Caco-2 (cell line): ENCODE measurements at regions of chr2 and their contacts with region 1.

Region 1: GRCh38 chr2:121018136-121019061 is 266.6 kb downstream of the TFCP2L1 start:
- DNase-seq: no peak
- H3K4me3 ChIP-seq: no peak overlapping the region
- H3K4me3 Mint-ChIP-seq: no peak overlapping the region
- H3K27ac Mint-ChIP-seq: no peak overlapping the region
- H3K4me1 ChIP-seq: peaks cover 4% of the 10 kb centered on the region
- H3K4me1 Mint-ChIP-seq: peaks cover 22% of the 10 kb centered on the region
- H3K27me3 ChIP-seq: no peaks in the 10 kb centered on the region
- H3K27me3 Mint-ChIP-seq: no peaks in the 10 kb centered on the region
- CTCF ChIP-seq: no peak

Region 2: DNA sequence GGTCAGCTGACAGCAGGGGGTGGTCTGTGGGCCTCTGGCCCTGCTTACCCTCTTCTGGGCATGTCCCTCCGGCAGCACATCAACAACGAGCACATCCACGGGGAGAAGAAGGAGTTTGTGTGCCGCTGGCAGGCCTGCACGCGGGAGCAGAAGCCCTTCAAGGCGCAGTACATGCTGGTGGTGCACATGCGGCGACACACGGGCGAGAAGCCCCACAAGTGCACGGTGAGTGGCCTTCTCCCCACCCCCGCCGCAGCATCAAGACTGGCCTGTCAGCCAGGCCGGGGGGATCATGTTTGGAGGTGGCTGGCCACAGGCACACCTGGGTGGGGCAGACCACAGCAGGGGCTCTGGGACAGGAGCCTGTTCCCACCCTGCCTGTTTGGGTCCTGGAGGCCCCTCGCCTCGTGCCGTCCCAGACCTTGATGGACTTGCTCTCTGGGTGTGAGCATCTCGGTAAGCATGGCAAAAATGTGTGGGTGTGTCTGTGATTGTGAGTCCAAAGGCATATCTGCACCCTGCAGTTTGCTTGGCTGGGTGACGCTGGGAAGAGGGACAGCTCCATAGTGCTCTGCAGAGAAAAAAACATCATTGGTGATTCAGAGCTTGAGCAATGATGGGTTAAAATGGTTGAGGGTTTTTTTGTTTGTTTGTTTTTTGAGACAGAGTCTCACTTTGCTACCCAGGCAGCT is 39.9 kb before region 1 on chr2:
- CTCF ChIA-PET with region 1: no interaction called
- POLR2A ChIA-PET with region 1: no interaction called
- intact Hi-C with region 1: loop called (anchors 1 kb)
- DNase-seq: peak; percentile 50 to 73
- H3K4me3 ChIP-seq: no peak overlapping the region
- H3K4me3 Mint-ChIP-seq: no peak overlapping the region
- H3K27ac Mint-ChIP-seq: no peak overlapping the region
- H3K4me1 ChIP-seq: peaks cover 35% of the 10 kb centered on the region
- H3K4me1 Mint-ChIP-seq: peaks cover 20% of the 10 kb centered on the region
- H3K27me3 ChIP-seq: no peaks in the 10 kb centered on the region
- H3K27me3 Mint-ChIP-seq: no peaks in the 10 kb centered on the region
- CTCF ChIP-seq: no peak

Region 3: DNA sequence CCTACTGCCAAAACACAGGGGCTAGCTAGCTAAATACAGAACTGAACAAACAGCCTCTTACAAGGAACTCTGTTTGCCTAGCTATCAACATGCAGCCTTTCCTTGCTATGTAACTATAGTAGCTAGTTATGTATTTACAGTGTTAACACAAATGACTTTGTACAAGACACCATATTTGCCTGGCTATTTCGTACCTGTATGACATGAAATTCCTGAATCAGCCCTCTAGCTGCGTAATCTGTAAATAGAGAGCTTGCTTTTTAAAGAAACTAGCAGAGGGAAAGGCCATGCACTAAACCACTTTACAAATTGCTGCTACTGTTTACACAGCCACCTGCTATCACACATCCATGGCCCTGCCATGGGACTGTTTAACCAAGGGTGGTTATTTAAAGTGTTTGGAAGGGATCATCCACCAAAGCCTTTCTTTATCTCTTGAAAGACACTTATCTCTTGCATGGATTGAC is 17.9 kb after region 1 on chr2:
- CTCF ChIA-PET with region 1: interaction called, 4 read pairs
- POLR2A ChIA-PET with region 1: interaction called, 6 read pairs
- intact Hi-C with region 1: loop called (anchors 1 kb)
- DNase-seq: peak; percentile 88
- H3K4me3 ChIP-seq: no peak overlapping the region
- H3K4me3 Mint-ChIP-seq: no peak overlapping the region
- H3K27ac Mint-ChIP-seq: no peak overlapping the region
- H3K4me1 ChIP-seq: peaks cover 15% of the 10 kb centered on the region
- H3K4me1 Mint-ChIP-seq: peaks cover 22% of the 10 kb centered on the region
- H3K27me3 ChIP-seq: peaks cover 10% of the 10 kb centered on the region
- H3K27me3 Mint-ChIP-seq: peaks cover 27% of the 10 kb centered on the region
- CTCF ChIP-seq: no peak